ENCODE measurements at regions of chr6 and their contacts with region 1.

Region 1: DNA sequence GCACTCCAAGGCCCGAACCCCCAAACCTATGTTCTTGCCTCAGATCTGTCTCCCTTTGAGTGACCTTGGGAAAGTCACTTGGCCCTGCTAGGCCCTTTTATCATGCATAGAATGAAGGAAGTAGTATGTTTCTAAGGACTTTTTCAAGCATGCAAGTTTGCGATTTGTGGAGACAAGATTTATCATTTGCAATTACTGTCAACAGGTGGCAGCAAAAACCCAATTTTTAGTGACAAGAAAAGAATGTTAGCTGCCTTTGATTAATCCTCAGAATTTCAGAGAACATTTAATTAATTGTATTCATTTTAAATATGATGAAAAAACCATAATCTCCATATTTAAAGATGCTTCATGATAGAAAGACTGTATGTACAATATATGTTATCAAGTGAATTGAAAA is 28.3 kb upstream of the PREP start:
- DNase-seq: peak; percentile 24 to 61
- ATAC-seq: peak in 1 of 2 experiments; percentile 38; a peak in 1 of 6 replicates
- H3K4me3 ChIP-seq: no peak overlapping the region
- H3K27ac ChIP-seq: peak overlapping the region; percentile 60 to 70; a peak in 4 of 6 replicates
- H3K4me1 ChIP-seq: peaks cover 39% of the 10 kb centered on the region
- CTCF ChIP-seq: peak; percentile 68
- EP300 ChIP-seq: no peak
- POLR2A ChIP-seq: no peak
- RAD21 ChIP-seq: peak; percentile 74 to 80

Region 2: DNA sequence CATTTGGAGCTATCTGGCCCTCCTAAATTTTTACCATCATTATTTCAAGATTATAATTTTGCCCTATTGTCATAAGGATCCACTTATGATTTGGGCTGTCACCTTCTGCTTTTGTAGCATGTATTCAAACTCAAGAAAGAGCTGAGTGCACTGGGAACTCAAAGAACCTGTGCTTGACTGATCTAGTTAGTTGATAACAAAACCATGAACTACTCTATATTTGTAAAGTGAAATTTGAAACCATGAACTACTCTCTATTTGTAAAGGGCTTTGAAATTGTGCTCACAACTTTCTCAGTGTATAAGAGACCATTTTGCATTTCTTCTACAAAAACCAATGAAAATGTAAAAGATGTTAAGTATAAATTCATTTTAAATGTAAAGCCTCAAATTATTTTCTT is 173.9 kb before region 1 on chr6:
- CTCF ChIA-PET with region 1: no interaction called
- POLR2A ChIA-PET with region 1: no interaction called
- DNase-seq: no peak
- ATAC-seq: no peak
- H3K4me3 ChIP-seq: no peak overlapping the region
- H3K27ac ChIP-seq: no peak overlapping the region
- H3K4me1 ChIP-seq: peaks cover 8% of the 10 kb centered on the region
- CTCF ChIP-seq: no peak
- EP300 ChIP-seq: no peak
- POLR2A ChIP-seq: no peak
- RAD21 ChIP-seq: no peak

Region 3: DNA sequence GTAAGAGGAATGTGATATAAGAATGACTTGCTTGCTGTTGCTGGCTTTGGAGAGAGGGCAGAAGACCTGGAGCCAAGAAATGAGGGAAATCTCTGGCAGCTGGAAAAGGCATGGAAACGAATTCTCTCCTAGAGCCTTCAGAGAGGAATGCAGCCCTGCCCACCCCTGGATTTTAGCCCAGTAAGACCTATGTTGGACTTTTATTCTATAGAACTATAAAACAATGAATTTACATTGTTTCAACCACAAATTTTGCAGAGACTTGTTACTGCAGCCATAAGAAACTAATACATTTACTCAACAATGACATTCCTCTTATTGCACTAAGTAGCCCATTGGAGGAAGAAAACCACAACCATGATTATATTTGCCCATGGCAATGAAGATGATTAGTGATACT is 11.1 kb after region 1 on chr6:
- CTCF ChIA-PET with region 1: no interaction called
- POLR2A ChIA-PET with region 1: no interaction called
- DNase-seq: no peak
- ATAC-seq: no peak
- H3K4me3 ChIP-seq: no peak overlapping the region
- H3K27ac ChIP-seq: no peak overlapping the region
- H3K4me1 ChIP-seq: no peaks in the 10 kb centered on the region
- CTCF ChIP-seq: no peak
- EP300 ChIP-seq: no peak
- POLR2A ChIP-seq: no peak
- RAD21 ChIP-seq: no peak

Region 4: GRCh38 chr6:105484238-105485161 is 53.3 kb after region 1 on chr6:
- CTCF ChIA-PET with region 1: interaction called, 12 read pairs
- POLR2A ChIA-PET with region 1: no interaction called
- DNase-seq: peak; percentile 6 to 56
- ATAC-seq: peak; percentile 73 to 83
- H3K4me3 ChIP-seq: no peak overlapping the region
- H3K27ac ChIP-seq: peak overlapping the region; percentile 59 to 78
- H3K4me1 ChIP-seq: peaks cover 49% of the 10 kb centered on the region
- CTCF ChIP-seq: peak; percentile 76
- EP300 ChIP-seq: no peak
- POLR2A ChIP-seq: no peak
- RAD21 ChIP-seq: peak; percentile 88 to 89

Region 5: DNA sequence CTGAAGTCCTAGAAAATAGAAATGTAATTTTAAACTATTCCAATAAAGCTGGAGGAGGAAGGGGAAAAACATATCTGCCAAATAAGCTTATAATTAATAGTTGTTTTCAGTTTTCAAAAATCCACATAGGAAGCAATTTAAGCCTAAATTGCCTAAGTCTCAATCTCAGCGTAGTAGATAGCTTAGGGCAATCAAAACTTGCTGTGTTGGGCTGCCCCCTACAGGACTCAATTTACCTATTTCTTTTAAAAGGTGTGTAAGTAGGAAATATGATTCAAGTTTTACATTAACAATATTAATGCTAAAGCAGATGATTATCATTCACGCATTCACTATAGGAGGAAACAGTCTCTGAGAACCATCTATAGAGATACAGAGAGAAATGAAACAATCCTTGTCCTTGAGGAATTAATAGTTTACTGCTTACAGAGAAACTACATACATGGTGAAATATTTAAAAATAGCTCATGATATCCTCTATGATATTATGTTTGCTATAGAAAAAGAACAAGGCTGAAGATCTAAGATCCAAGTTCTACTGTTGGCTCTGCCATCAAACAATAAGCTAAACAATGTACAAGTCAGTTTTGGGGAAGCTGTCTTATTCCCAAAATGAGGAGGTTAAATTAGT is 792.2 kb after region 1 on chr6:
- CTCF ChIA-PET with region 1: interaction called, 42 read pairs
- POLR2A ChIA-PET with region 1: no interaction called
- DNase-seq: peak; percentile 6 to 76
- ATAC-seq: peak; percentile 54 to 84; a peak in 3 of 6 replicates
- H3K4me3 ChIP-seq: no peak overlapping the region
- H3K27ac ChIP-seq: peak overlapping the region; percentile 16 to 56; a peak in 2 of 6 replicates
- H3K4me1 ChIP-seq: peaks cover 39% of the 10 kb centered on the region
- CTCF ChIP-seq: peak; percentile 69
- EP300 ChIP-seq: no peak
- POLR2A ChIP-seq: no peak
- RAD21 ChIP-seq: peak; percentile 81 to 87

Region 6: GRCh38 chr6:106300944-106301343 is 869.7 kb after region 1 on chr6:
- CTCF ChIA-PET with region 1: interaction called, 11 read pairs
- POLR2A ChIA-PET with region 1: no interaction called
- DNase-seq: peak; percentile 6 to 50
- ATAC-seq: peak in 1 of 2 experiments; percentile 69; a peak in 3 of 6 replicates
- H3K4me3 ChIP-seq: no peak overlapping the region
- H3K27ac ChIP-seq: peak overlapping the region; percentile 59 to 60; a peak in 4 of 6 replicates
- H3K4me1 ChIP-seq: peaks cover 30% of the 10 kb centered on the region
- CTCF ChIP-seq: peak; percentile 56
- EP300 ChIP-seq: no peak
- POLR2A ChIP-seq: no peak
- RAD21 ChIP-seq: peak; percentile 71 to 78

Measured in A549 (cell line).